ENCODE measurements at regions of chr18 and their contacts with region 1.

Region 1: GRCh38 chr18:51070545-51070944 is 40.5 kb downstream of the SMAD4 start:
- DNase-seq: peak; percentile 56
- H3K4me3 ChIP-seq: no peak overlapping the region
- H3K27me3 ChIP-seq: no peaks in the 10 kb centered on the region
- CTCF ChIP-seq: no peak

Region 2: DNA sequence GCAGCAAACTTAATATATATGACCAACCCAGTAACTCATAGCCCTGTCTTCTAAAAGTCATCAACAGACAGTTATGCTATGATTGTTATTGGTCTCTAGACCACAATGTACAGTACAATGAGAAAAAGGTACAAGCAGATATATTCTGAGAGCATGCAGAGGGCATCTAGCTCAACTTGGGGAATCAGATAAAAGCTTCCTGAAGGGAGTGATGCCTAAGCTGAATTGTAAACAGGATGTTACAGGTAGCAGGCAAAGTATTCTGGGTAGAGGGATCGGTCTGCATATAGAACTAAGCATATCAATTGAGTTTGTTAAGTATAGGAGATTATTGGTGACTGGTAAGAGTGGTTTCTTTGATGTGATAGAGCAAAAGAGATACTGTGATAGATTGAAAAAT is 161.3 kb before region 1 on chr18:
- CTCF ChIA-PET with region 1: no interaction called
- POLR2A ChIA-PET with region 1: no interaction called
- DNase-seq: no peak
- H3K4me3 ChIP-seq: no peak overlapping the region
- H3K27me3 ChIP-seq: no peaks in the 10 kb centered on the region
- CTCF ChIP-seq: no peak

Region 3: DNA sequence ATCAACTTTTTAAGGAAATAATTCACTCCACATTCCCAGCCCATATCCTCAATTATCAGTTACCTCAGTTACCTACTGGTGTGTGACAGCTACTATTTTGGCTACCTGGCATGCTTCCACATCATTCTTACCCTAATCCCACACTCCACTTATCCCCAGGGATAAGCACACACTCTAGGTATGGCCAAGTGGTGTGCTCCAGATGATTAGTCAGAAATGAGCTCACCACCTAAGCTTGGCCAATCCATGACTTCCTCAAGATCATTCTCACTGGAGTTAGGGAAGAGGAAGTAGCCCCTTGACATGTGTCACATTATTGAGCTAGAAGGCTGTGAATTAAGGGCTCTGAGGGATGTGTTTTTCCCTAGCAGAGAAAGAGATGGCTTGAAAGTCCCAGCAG is 61.5 kb before region 1 on chr18:
- CTCF ChIA-PET with region 1: no interaction called
- POLR2A ChIA-PET with region 1: interaction called, 10 read pairs
- DNase-seq: no peak
- H3K4me3 ChIP-seq: no peak overlapping the region
- H3K27me3 ChIP-seq: no peaks in the 10 kb centered on the region
- CTCF ChIP-seq: no peak

Region 4: DNA sequence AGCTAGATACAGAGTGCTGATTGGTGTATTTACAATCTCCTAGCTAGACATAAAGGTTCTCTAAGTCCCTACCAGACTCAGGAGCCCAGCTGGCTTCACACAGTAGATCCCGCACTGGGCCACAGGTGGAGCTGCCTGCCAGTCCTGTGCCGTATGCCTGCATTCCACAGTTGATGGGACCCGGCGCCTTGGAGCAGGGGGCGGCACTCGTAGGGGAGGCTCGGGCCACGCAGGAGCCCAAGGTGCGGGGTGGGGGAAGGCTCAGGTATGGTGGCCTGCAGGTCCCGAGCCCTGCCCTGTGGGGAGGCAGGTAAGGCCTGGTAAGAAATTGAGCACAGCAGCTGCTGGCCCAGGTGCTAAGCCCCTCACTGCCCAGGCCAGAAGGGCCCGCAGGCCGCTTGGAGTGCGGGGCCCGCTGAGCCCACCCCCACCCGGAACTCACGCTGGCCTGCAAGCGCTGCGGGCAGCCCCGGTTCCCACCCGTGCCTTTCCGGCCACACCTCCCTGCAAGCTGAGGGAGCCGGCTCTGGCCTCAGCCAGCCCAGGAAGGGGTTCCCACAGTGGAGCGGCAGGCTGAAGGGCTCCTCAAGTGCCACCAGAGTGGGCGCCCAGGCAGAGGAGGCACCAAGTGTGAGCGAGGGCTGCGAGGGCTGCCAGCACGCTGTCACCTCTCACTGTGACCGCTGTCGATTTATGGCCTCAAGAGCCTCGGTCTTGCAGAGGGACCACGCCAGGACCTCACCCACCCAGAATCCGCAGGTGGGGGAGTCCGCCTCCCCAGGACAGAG is 50.5 kb after region 1 on chr18:
- CTCF ChIA-PET with region 1: no interaction called
- POLR2A ChIA-PET with region 1: no interaction called
- DNase-seq: no peak
- H3K4me3 ChIP-seq: no peak overlapping the region
- H3K27me3 ChIP-seq: no peaks in the 10 kb centered on the region
- CTCF ChIP-seq: no peak

Region 5: DNA sequence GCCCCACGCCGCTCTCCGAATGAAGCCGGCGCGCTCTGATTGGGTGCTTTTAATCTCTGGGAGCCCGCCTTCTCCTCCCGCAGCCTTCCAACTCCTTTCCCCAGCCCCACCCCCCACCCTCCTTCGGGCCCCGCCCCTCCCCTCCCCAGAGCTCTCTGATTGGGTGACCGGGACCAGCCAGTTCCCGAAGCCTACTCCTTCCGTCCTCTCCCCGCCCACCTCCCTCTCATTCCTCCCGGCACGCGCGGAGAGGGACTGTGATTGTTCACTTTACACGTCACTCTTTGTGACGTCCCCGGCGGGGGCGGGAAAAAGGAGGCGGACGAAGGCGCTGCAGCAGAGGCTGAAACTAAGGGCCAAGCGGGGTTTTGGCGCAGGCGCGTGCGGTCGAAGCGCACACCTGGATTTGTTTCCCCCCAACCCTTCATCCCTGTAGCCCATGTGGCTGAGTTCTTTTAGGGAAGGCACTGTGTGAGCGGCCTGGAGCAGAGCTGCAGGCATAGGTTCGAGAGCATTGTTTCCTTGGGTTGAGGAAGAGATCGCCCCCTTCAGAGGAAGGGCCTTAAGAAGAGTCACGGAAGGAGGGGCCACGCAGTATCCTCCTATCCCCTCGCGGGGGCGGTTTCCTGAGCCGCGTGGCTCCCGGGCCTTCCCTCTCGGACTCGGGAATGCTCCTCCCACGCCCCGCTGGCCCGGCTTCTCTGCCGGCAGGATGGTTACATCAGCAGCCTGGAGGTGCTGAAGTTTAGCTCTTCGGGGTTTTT is 127.3 kb after region 1 on chr18 and contains the start of gene MEX3C:
- CTCF ChIA-PET with region 1: no interaction called
- POLR2A ChIA-PET with region 1: interaction called, 17 read pairs
- DNase-seq: peak; percentile 92
- H3K4me3 ChIP-seq: peak within 1 kb of the TSS; percentile 97
- H3K27me3 ChIP-seq: no peaks in the 10 kb centered on the region
- CTCF ChIP-seq: peak; percentile 47
- polyA plus RNA-seq, gene MEX3C: 34.4 and 51.1 TPM in 2 replicates

Measured in BJ (cell line).